B cell (primary cell): ENCODE measurements at regions of chr16 and their contacts with region 1.

Region 1: GRCh38 chr16:58515125-58515870 is at the start of gene SETD6:
- DNase-seq: peak; percentile 81
- ATAC-seq: peak; percentile 77
- H3K4me3 ChIP-seq: peak within 1 kb of the TSS; percentile 41 to 93 (median 79)
- H3K4me3 Mint-ChIP-seq: peak within 1 kb of the TSS; percentile 94
- H3K27ac ChIP-seq: peak within 1 kb of the TSS; percentile 38 to 68
- H3K27ac Mint-ChIP-seq: peak within 1 kb of the TSS; percentile 86
- H3K4me1 ChIP-seq: peaks cover 10 to 14% of the 10 kb centered on the region in 2 donors
- H3K4me1 Mint-ChIP-seq: peaks cover 20% of the 10 kb centered on the region
- H3K27me3 ChIP-seq: no peaks in the 10 kb centered on the region
- H3K27me3 Mint-ChIP-seq: no peaks in the 10 kb centered on the region
- CTCF ChIP-seq: no peak
- total RNA-seq, gene SETD6: 37.4 and 41.0 TPM in 2 replicates

Region 2: DNA sequence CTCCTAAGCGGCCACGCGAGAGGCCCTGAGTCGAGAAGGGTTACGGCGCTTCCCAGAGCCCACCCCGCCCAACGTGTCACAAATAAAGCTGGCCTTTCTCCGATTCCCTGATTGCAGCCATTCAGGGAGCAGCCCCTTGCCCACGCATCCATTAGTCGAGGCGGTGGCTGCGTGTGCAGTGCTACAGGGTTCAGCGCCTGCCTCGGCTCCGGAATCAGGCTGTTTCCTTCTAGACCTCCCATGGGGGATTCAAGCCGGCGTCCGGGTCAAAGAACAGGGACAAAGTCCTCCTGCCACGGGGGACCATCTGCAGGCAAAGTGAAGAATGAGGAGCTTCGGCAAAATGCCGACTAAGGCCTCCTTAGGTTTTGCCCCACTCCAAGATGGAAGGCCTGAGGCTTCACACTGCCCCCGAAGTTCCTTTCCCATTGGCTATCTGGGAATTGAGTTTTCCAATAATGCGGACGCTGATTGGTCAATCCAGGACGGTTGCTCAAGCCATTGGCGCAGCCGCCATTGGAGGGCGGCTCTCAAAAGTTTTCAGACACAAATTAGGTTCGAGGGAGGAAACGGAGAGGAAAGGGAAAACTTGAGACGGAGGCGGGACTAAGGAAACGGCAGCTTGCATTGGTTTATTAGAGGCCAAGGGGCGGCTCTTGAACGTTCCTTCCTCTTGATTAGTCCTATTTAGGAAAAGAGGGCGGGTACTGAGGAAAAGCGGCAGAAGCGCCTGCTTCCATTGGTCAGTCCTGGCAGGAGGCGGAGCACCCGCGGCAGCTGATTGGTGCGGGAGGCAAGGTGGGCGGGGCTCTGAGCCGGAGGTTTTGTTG is 780.2 kb before region 1 on chr16:
- CTCF ChIA-PET with region 1: no interaction called
- POLR2A ChIA-PET with region 1: no interaction called
- intact Hi-C with region 1: loop called (anchors 2 kb)
- DNase-seq: peak; percentile 99
- ATAC-seq: peak; percentile 88
- H3K4me3 ChIP-seq: peak overlapping the region; percentile 65 to 98 (median 90)
- H3K4me3 Mint-ChIP-seq: peak overlapping the region; percentile 93
- H3K27ac ChIP-seq: peak overlapping the region; percentile 37 to 78
- H3K27ac Mint-ChIP-seq: peak overlapping the region; percentile 89
- H3K4me1 ChIP-seq: peaks cover 15 to 19% of the 10 kb centered on the region in 2 donors
- H3K4me1 Mint-ChIP-seq: peaks cover 34% of the 10 kb centered on the region
- H3K27me3 ChIP-seq: no peaks in the 10 kb centered on the region
- H3K27me3 Mint-ChIP-seq: no peaks in the 10 kb centered on the region
- CTCF ChIP-seq: no peak

Region 3: DNA sequence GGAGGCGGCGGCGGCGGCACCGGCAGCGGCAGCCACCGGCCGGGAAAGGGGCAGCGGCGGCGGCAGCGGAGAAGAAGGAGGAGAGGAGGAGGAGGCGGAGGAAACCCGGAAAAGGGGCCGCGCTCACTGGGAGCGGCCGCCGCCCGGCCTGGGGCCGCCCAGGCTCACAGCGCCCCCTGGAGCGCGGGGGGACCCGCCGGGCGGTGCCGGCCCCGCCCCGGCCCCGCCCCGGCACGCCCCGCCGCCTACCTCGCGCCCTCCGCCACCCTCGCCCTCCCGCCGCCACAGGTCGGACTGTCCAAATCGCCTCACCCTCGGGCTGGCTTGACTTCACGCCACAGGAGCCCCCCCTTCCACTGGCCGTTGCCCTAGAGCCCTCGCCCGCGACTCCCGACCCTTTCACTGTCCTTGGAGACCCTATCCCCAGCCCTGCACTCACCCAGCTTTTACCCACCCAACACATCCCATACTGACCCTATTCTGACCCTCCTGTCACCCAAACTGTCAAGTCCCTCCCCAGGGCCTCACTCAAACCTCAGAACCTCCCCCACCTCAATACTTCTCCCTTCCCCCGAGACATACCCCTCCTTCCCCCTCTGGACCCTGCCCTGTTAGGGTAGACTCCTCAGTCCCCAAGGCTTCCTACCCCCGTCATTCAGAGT is 317.1 kb before region 1 on chr16 and contains the start of gene CSNK2A2:
- CTCF ChIA-PET with region 1: no interaction called
- POLR2A ChIA-PET with region 1: no interaction called
- intact Hi-C with region 1: loop called (anchors 5 kb)
- DNase-seq: peak; percentile 82
- ATAC-seq: peak; percentile 93
- H3K4me3 ChIP-seq: peak within 1 kb of the TSS; percentile 44 to 83 (median 64)
- H3K4me3 Mint-ChIP-seq: peak within 1 kb of the TSS; percentile 90
- H3K27ac ChIP-seq: peak within 1 kb of the TSS in 1 of 2 donors; percentile 55
- H3K27ac Mint-ChIP-seq: peak within 1 kb of the TSS; percentile 81
- H3K4me1 ChIP-seq: peaks cover 15 to 18% of the 10 kb centered on the region in 2 donors
- H3K4me1 Mint-ChIP-seq: peaks cover 33% of the 10 kb centered on the region
- H3K27me3 ChIP-seq: peaks cover 0 to 7% (median 2%) of the 10 kb centered on the region in 4 experiments
- H3K27me3 Mint-ChIP-seq: peaks cover 10% of the 10 kb centered on the region
- CTCF ChIP-seq: no peak
- total RNA-seq, gene CSNK2A2: 63.5 and 69.4 TPM in 2 replicates

Region 4: DNA sequence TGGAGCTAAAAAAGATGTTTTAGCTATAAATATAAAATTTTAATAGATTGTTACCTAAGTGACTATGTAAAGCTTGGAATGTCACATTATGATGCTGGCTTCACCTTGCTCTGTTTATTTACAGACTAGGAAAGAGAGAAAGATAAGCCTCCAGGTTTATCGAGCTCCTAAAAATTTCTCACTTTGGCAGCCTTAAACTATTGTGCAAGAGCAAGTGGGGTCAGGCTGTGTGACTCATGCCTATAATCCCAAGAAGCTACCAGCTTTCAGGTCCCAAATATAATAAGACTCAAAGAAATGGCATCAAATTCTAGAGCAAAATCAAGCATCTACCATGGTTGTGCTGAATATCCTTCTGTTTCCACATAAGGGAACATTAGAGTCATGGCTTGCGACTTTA is 186.2 kb before region 1 on chr16:
- CTCF ChIA-PET with region 1: no interaction called
- POLR2A ChIA-PET with region 1: no interaction called
- intact Hi-C with region 1: no loop called
- DNase-seq: no peak
- ATAC-seq: no peak
- H3K4me3 ChIP-seq: no peak overlapping the region
- H3K4me3 Mint-ChIP-seq: no peak overlapping the region
- H3K27ac ChIP-seq: no peak overlapping the region
- H3K27ac Mint-ChIP-seq: no peak overlapping the region
- H3K4me1 ChIP-seq: no peaks in the 10 kb centered on the region
- H3K4me1 Mint-ChIP-seq: no peaks in the 10 kb centered on the region
- H3K27me3 ChIP-seq: peaks cover 0 to 8% (median 2%) of the 10 kb centered on the region in 4 experiments
- H3K27me3 Mint-ChIP-seq: peaks cover 30% of the 10 kb centered on the region
- CTCF ChIP-seq: no peak

Region 5: GRCh38 chr16:58501242-58502131 is 13.8 kb before region 1 on chr16:
- CTCF ChIA-PET with region 1: interaction called, 3 read pairs
- POLR2A ChIA-PET with region 1: no interaction called
- intact Hi-C with region 1: loop called (anchors 1 kb)
- DNase-seq: peak; percentile 61
- ATAC-seq: peak; percentile 39
- H3K4me3 ChIP-seq: peak overlapping the region in 4 of 5 experiments; percentile 55 to 73 (median 58)
- H3K4me3 Mint-ChIP-seq: peak overlapping the region; percentile 89
- H3K27ac ChIP-seq: no peak overlapping the region
- H3K27ac Mint-ChIP-seq: no peak overlapping the region
- H3K4me1 ChIP-seq: peaks cover 23 to 25% of the 10 kb centered on the region in 2 donors
- H3K4me1 Mint-ChIP-seq: peaks cover 22% of the 10 kb centered on the region
- H3K27me3 ChIP-seq: peaks cover 0 to 47% (median 17%) of the 10 kb centered on the region in 4 experiments
- H3K27me3 Mint-ChIP-seq: peaks cover 23% of the 10 kb centered on the region
- CTCF ChIP-seq: no peak

Region 6: DNA sequence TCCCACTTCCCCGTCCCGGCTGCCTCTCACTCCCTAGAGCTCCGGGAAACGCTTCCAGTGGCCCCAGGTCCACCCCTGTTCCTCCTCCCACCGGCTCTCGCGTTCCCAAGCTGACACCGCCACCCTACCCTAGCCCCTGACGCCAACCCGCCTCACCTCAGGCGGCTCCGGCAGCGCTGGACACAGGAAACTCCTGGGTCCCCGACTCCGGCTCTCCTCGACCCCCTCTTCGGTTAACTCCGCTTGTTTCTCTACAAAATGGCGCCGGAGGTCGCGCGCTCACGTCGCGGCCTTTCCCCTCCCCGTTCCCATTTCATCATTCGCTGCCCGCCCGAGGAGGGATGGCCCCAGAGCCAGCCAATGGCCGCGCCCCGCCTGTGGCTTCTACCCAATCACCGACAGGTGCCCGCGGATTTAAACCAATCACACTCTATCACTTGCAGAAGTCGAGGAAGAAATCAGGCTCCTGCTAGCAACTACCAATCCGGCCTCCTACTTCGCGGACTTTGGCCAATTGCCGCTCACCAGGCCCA is 114.3 kb after region 1 on chr16 and contains the start of gene CNOT1:
- CTCF ChIA-PET with region 1: interaction called, 3 read pairs
- POLR2A ChIA-PET with region 1: no interaction called
- intact Hi-C with region 1: loop called (anchors 1 kb)
- DNase-seq: no peak
- ATAC-seq: peak; percentile 80
- H3K4me3 ChIP-seq: peak within 1 kb of the TSS; percentile 54 to 100 (median 100)
- H3K4me3 Mint-ChIP-seq: peak within 1 kb of the TSS; percentile 93
- H3K27ac ChIP-seq: peak within 1 kb of the TSS; percentile 99 to 100
- H3K27ac Mint-ChIP-seq: peak within 1 kb of the TSS; percentile 97
- H3K4me1 ChIP-seq: peaks cover 19 to 26% of the 10 kb centered on the region in 2 donors
- H3K4me1 Mint-ChIP-seq: peaks cover 40% of the 10 kb centered on the region
- H3K27me3 ChIP-seq: no peaks in the 10 kb centered on the region
- H3K27me3 Mint-ChIP-seq: no peaks in the 10 kb centered on the region
- CTCF ChIP-seq: no peak
- total RNA-seq, gene CNOT1: 246 and 268 TPM in 2 replicates

Region 7: GRCh38 chr16:58661199-58661830 is 146.0 kb after region 1 on chr16:
- CTCF ChIA-PET with region 1: interaction called, 23 read pairs
- POLR2A ChIA-PET with region 1: no interaction called
- intact Hi-C with region 1: no loop called
- DNase-seq: peak; percentile 60
- ATAC-seq: peak; percentile 77
- H3K4me3 ChIP-seq: no peak overlapping the region
- H3K4me3 Mint-ChIP-seq: no peak overlapping the region
- H3K27ac ChIP-seq: no peak overlapping the region
- H3K27ac Mint-ChIP-seq: no peak overlapping the region
- H3K4me1 ChIP-seq: no peaks in the 10 kb centered on the region
- H3K4me1 Mint-ChIP-seq: no peaks in the 10 kb centered on the region
- H3K27me3 ChIP-seq: no peaks in the 10 kb centered on the region
- H3K27me3 Mint-ChIP-seq: peaks cover 7% of the 10 kb centered on the region
- CTCF ChIP-seq: peak; percentile 48

Region 8: GRCh38 chr16:58755989-58756649 is 240.8 kb after region 1 on chr16:
- CTCF ChIA-PET with region 1: interaction called, 28 read pairs
- POLR2A ChIA-PET with region 1: no interaction called
- intact Hi-C with region 1: no loop called
- DNase-seq: peak; percentile 80
- ATAC-seq: peak; percentile 89
- H3K4me3 ChIP-seq: peak overlapping the region in 3 of 5 experiments; percentile 1 to 30 (median 21)
- H3K4me3 Mint-ChIP-seq: peak overlapping the region; percentile 66
- H3K27ac ChIP-seq: peak overlapping the region in 1 of 2 donors; percentile 16
- H3K27ac Mint-ChIP-seq: peak overlapping the region; percentile 21
- H3K4me1 ChIP-seq: peaks cover 6 to 7% of the 10 kb centered on the region in 2 donors
- H3K4me1 Mint-ChIP-seq: peaks cover 9% of the 10 kb centered on the region
- H3K27me3 ChIP-seq: no peaks in the 10 kb centered on the region
- H3K27me3 Mint-ChIP-seq: peaks cover 5% of the 10 kb centered on the region
- CTCF ChIP-seq: peak; percentile 76